SK-N-SH (cell line): ENCODE measurements at regions of chr2 and their contacts with region 1.

Region 1: GRCh38 chr2:25651071-25651470 is 22.3 kb downstream of the DTNB start:
- DNase-seq: no peak
- H3K4me3 ChIP-seq: no peak overlapping the region
- H3K27ac ChIP-seq: no peak overlapping the region
- H3K4me1 ChIP-seq: peaks cover 0 to 2% of the 10 kb centered on the region in 2 experiments; a peak in 2 of 4 replicates
- H3K27me3 ChIP-seq: no peaks in the 10 kb centered on the region
- CTCF ChIP-seq: no peak
- EP300 ChIP-seq: no peak
- RAD21 ChIP-seq: no peak

Region 2: GRCh38 chr2:25664183-25664964 is 13.3 kb after region 1 on chr2:
- CTCF ChIA-PET with region 1: interaction called, 14 read pairs
- POLR2A ChIA-PET with region 1: no interaction called
- DNase-seq: peak; percentile 64
- H3K4me3 ChIP-seq: no peak overlapping the region
- H3K27ac ChIP-seq: no peak overlapping the region
- H3K4me1 ChIP-seq: peaks cover 0 to 2% of the 10 kb centered on the region in 2 experiments; a peak in 1 of 4 replicates
- H3K27me3 ChIP-seq: no peaks in the 10 kb centered on the region
- CTCF ChIP-seq: peak; percentile 85
- EP300 ChIP-seq: no peak
- RAD21 ChIP-seq: peak; percentile 80

Region 3: GRCh38 chr2:25677877-25678276 is 26.8 kb after region 1 on chr2:
- CTCF ChIA-PET with region 1: no interaction called
- POLR2A ChIA-PET with region 1: no interaction called
- DNase-seq: no peak
- H3K4me3 ChIP-seq: no peak overlapping the region
- H3K27ac ChIP-seq: no peak overlapping the region
- H3K4me1 ChIP-seq: peaks cover 0 to 4% of the 10 kb centered on the region in 2 experiments; a peak in 1 of 4 replicates
- H3K27me3 ChIP-seq: no peaks in the 10 kb centered on the region
- CTCF ChIP-seq: no peak
- EP300 ChIP-seq: no peak
- RAD21 ChIP-seq: no peak